Transverse colon (tissue), 4 donors: ENCODE measurements at regions of chr14 and their contacts with region 1.

Region 1: DNA sequence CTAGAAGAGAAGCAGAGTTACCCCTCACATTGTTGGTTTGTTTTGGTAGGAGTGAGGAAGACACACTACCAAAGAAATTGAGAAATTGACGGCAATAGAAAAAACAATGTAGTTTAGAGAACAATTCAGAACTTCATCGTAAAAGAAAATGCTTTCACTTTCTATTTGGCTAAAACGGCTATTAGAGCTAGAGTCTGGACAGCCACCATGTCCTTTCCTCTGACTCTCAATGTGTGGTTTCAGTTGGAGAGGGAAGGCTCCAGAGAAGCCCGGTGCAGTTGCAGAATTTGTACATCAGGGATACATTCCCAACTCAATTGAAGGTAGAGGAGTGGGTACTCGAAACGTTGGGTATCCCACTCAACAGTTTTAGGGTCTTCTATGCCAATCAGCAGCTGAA is 535.3 kb downstream of the GALC start:
- DNase-seq: no peak
- H3K4me3 ChIP-seq: peak overlapping the region in 1 of 4 donors; percentile 10
- H3K27ac ChIP-seq: no peak overlapping the region
- H3K4me1 ChIP-seq: no peaks in the 10 kb centered on the region
- H3K27me3 ChIP-seq: no peaks in the 10 kb centered on the region
- CTCF ChIP-seq: no peak
- EP300 ChIP-seq: no peak
- POLR2A ChIP-seq: no peak

Region 2: GRCh38 chr14:86153480-86153879 is 1304.2 kb before region 1 on chr14:
- in situ Hi-C with region 1: no loop called
- intact Hi-C with region 1: no loop called
- DNase-seq: no peak
- H3K4me3 ChIP-seq: no peak overlapping the region
- H3K27ac ChIP-seq: no peak overlapping the region
- H3K4me1 ChIP-seq: no peaks in the 10 kb centered on the region
- H3K27me3 ChIP-seq: no peaks in the 10 kb centered on the region
- CTCF ChIP-seq: no peak
- EP300 ChIP-seq: no peak
- POLR2A ChIP-seq: no peak

Region 3: GRCh38 chr14:87529081-87529480 is 71.4 kb after region 1 on chr14:
- in situ Hi-C with region 1: no loop called
- intact Hi-C with region 1: loop called (anchors 2 kb)
- DNase-seq: no peak
- H3K4me3 ChIP-seq: no peak overlapping the region
- H3K27ac ChIP-seq: no peak overlapping the region
- H3K4me1 ChIP-seq: no peaks in the 10 kb centered on the region
- H3K27me3 ChIP-seq: no peaks in the 10 kb centered on the region
- CTCF ChIP-seq: no peak
- EP300 ChIP-seq: no peak
- POLR2A ChIP-seq: no peak